Activated naive CD4-positive, alpha-beta T cell treated with anti-CD3 and anti-CD28 coated beads for 36 hours (primary cell): ENCODE measurements at regions of chr19 and their contacts with region 1.

Region 1: DNA sequence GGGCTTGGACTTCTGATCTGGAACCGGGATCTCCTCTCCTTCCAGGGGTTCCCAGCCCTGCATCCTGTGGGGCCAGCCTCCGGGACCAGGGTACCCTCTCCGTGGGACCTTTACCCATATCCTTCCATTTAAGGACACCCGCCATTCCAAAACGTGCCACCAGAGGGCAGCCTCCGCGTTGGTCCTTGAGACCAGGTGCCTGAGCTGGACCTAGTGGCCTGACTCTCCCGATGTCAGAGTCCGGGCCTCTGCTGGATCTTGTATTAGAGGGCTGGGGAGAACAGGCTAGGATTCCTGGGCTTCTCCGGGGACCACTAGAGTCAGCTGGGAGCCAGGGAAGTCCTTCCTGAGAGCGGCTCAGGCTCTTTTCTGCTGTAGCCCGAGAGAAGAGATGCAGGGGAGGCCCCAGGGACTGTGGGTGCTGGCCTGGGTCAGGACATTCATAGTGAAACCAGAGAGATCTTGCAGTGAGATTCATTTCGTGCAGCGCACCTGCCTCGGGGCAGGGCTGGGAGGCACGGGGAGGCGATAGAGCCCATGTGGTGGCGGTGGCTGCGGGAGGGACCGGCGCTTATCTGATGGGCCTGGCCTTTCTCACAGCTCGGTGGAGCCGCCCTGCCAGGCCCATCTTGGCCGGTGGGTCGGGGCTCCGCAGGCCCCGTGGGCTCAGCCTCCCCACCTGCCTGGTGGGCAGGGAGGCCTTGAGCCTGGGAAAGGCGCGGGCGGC is 9.8 kb upstream of the SLC7A10 start:
- DNase-seq: peak; percentile 81
- H3K4me3 Mint-ChIP-seq: no peak overlapping the region
- H3K27ac Mint-ChIP-seq: no peak overlapping the region
- H3K4me1 Mint-ChIP-seq: no peaks in the 10 kb centered on the region
- H3K27me3 Mint-ChIP-seq: peaks cover 11% of the 10 kb centered on the region

Region 2: DNA sequence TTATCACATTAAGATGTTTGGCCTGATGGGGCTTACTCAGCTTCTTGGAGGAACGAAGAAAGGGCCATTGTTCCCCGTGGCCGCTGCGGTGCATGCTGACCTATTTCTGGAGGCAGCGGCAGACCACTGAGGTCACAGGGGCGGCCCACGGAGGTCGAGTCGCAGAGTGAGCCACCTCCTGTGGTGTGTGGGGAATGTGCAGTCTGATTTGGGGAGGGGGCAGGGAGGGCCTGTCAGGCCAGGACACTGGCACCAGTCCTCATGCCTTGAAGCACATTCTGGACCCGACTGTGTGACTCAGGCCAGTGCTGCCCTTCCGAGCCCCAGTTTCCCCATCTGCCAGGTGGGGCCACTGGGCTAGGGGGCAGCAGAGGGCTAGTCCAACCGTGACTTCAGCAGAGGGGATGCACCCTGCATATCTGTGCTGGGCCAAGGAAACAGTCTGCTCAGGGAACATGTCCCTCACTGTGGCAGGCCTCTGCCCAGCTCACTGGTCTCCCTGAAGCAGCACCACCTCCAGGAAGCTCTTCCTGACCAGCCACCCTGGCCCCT is 16.1 kb before region 1 on chr19:
- CTCF ChIA-PET with region 1: no interaction called
- intact Hi-C with region 1: no loop called
- DNase-seq: no peak
- H3K4me3 Mint-ChIP-seq: no peak overlapping the region
- H3K27ac Mint-ChIP-seq: no peak overlapping the region
- H3K4me1 Mint-ChIP-seq: no peaks in the 10 kb centered on the region
- H3K27me3 Mint-ChIP-seq: peaks cover 12% of the 10 kb centered on the region

Region 3: DNA sequence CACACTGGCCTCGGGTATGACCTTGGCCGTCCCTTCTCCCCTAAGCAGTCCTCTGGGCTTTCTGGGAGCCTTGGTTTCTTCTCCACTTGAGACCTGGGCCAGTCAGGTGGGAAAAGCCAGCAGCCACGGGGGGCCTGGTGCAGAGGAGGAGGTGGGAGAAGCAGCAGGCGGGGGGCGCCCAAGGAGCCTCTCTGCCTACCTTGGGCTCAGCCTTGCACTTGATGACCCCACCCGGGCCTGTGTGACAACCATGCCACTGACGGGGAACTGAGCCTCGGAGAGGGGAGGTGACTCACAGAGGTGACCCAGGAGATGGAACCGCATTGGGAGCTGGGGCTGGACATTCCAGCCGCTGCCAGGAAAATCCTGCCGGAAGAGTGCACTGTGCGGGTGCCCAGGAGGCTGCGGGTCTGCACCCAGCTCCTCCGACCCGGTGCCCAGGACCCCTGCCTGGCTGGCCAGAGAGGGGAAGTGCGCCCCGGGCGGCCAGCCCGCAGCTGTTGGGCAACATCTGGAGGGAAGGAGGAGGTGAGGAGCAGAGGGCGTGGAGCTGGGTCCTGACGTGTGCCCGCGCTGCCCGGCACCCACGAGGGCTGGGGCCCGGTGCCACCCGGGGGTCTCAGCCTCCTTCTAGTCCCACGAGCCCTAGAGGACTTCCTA is 13.7 kb after region 1 on chr19:
- CTCF ChIA-PET with region 1: no interaction called
- intact Hi-C with region 1: no loop called
- DNase-seq: no peak
- H3K4me3 Mint-ChIP-seq: no peak overlapping the region
- H3K27ac Mint-ChIP-seq: no peak overlapping the region
- H3K4me1 Mint-ChIP-seq: no peaks in the 10 kb centered on the region
- H3K27me3 Mint-ChIP-seq: no peaks in the 10 kb centered on the region

Region 4: DNA sequence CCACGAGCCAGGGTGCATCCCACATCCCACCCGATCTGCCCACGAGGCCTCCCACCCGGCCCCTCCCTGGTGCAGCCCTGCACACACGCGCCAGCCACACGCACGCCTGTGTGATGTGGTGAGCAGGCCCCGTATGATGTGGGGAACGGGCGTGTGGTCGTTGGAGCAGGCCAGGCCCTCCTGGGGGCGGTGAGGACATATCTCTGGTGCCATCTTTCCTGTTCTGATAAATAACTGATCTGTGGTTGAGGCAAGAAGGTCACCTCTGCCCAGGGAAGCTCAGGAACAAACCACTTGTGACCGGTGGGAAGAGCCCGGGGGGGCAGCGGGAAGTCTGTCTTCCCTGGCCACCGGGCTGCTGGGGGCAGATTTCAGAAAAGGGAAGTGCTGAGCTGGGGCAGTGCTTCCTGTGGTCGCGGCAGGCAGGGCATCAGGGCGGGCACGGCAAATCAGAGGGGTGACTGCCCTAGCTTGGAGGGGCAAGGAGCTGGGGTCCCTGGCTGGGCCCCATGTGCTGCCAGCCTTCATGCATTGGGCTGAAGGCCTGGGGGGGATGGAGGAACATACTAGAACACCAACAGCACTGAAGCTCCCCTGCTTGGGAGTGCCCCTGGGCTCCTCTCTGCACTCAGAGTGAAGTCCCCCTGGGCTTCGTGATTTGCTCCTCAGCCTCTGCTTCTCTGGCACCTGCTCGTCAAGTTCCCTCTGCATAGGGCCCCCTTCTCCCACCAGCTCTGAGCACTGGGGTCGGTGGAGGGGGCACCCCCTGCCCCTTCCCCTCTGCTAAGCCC is 25.4 kb after region 1 on chr19:
- CTCF ChIA-PET with region 1: no interaction called
- intact Hi-C with region 1: no loop called
- DNase-seq: no peak
- H3K4me3 Mint-ChIP-seq: no peak overlapping the region
- H3K27ac Mint-ChIP-seq: no peak overlapping the region
- H3K4me1 Mint-ChIP-seq: peaks cover 5% of the 10 kb centered on the region
- H3K27me3 Mint-ChIP-seq: peaks cover 26% of the 10 kb centered on the region

Region 5: GRCh38 chr19:33302175-33302973 is 66.9 kb after region 1 on chr19 and contains the start of gene CEBPA:
- CTCF ChIA-PET with region 1: interaction called, 4 read pairs
- intact Hi-C with region 1: loop called (anchors 2 kb)
- DNase-seq: peak; percentile 52
- H3K4me3 Mint-ChIP-seq: peak within 1 kb of the TSS; percentile 42
- H3K27ac Mint-ChIP-seq: no peak within 1 kb of the TSS
- H3K4me1 Mint-ChIP-seq: no peaks in the 10 kb centered on the region
- H3K27me3 Mint-ChIP-seq: peaks cover 35% of the 10 kb centered on the region
- total RNA-seq, gene CEBPA: 0.10 TPM